ENCODE measurements at regions of chr12 and their contacts with region 1.

Region 1: DNA sequence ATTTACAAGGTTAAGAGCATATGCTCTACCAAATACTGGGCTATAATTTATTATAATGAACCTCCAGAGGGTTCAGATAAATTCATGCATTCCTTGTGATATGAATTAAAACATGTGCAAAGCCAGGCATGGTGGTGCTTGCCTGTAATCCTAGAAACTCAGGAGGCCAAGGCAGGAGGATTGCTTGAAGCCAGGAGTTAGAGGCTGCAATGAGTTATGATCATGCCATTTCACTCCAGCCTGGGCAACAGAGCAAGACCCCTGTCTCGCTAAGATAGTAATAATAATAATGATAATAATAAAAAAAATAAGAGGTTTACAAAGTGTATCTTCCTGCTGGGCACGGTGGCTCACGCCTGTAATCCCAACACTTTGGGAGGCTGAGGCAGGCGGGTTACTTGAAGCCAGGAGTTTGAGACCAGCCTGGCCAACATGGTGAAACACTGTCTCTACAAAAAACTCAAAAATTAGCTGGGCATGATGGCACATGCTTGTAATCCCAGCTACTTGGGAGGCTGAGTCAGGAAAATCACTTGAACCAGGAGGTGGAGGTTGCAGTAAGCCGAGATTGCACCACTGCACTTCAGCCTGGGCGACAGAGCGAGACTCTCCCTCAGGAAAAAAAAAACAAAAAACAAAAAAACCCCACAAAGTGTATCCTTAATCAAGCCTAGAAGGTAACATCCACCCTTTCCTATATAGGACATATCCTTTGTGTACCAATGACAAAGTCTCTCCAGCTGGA is 7.3 kb upstream of the CS start:
- DNase-seq: no peak
- H3K4me3 ChIP-seq: no peak overlapping the region
- H3K27ac ChIP-seq: no peak overlapping the region
- H3K4me1 ChIP-seq: no peaks in the 10 kb centered on the region
- H3K27me3 ChIP-seq: no peaks in the 10 kb centered on the region
- CTCF ChIP-seq: no peak
- EP300 ChIP-seq: no peak
- POLR2A ChIP-seq: no peak
- RAD21 ChIP-seq: no peak

Region 2: DNA sequence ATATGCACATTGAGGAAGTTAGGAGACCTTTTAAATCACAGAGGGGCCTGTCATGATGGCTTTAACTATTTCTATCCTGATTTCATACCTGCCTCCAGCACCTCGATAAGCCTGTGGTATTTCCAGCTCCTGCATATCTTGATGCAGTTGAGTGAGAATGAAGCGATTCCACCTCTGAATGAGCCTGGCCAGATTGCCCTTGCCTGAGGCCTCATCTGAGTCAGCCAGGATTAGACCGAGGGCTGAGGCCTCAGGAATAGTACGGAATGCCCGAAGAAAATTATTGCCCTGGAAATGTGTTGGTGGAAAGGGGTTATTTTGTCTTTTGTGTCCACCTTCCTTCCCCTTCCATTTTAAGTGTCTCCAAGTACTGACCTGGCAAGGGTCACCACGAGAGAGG is 16.8 kb after region 1 on chr12:
- CTCF ChIA-PET with region 1: interaction called, 3 read pairs
- POLR2A ChIA-PET with region 1: interaction called, 11 read pairs
- DNase-seq: no peak
- H3K4me3 ChIP-seq: no peak overlapping the region
- H3K27ac ChIP-seq: no peak overlapping the region
- H3K4me1 ChIP-seq: no peaks in the 10 kb centered on the region; a peak in 1 of 7 replicates
- H3K27me3 ChIP-seq: no peaks in the 10 kb centered on the region
- CTCF ChIP-seq: no peak
- EP300 ChIP-seq: no peak
- POLR2A ChIP-seq: no peak
- RAD21 ChIP-seq: no peak

Region 3: GRCh38 chr12:56346703-56347102 is 39.3 kb after region 1 on chr12:
- CTCF ChIA-PET with region 1: interaction called, 11 read pairs
- POLR2A ChIA-PET with region 1: interaction called, 3 read pairs
- DNase-seq: peak in 1 of 2 experiments; percentile 63
- H3K4me3 ChIP-seq: no peak overlapping the region
- H3K27ac ChIP-seq: no peak overlapping the region
- H3K4me1 ChIP-seq: no peaks in the 10 kb centered on the region
- H3K27me3 ChIP-seq: no peaks in the 10 kb centered on the region
- CTCF ChIP-seq: peak; percentile 38 to 56 (median 46)
- EP300 ChIP-seq: no peak
- POLR2A ChIP-seq: no peak
- RAD21 ChIP-seq: peak; percentile 52 to 61

Region 4: GRCh38 chr12:56437430-56438176 is 130.2 kb after region 1 on chr12:
- CTCF ChIA-PET with region 1: no interaction called
- POLR2A ChIA-PET with region 1: no interaction called
- DNase-seq: no peak
- H3K4me3 ChIP-seq: no peak overlapping the region
- H3K27ac ChIP-seq: no peak overlapping the region
- H3K4me1 ChIP-seq: no peaks in the 10 kb centered on the region; a peak in 1 of 7 replicates
- H3K27me3 ChIP-seq: no peaks in the 10 kb centered on the region
- CTCF ChIP-seq: no peak
- EP300 ChIP-seq: no peak
- POLR2A ChIP-seq: no peak
- RAD21 ChIP-seq: no peak

Measured in H1 (cell line).